ENCODE measurements at regions of chr17 and their contacts with region 1.

Region 1: GRCh38 chr17:27236717-27237315 is 57.1 kb upstream of the WSB1 start:
- DNase-seq: peak; percentile 61
- ATAC-seq: peak; percentile 73
- H3K4me3 ChIP-seq: no peak overlapping the region
- H3K27ac ChIP-seq: no peak overlapping the region
- H3K4me1 ChIP-seq: peaks cover 9 to 11% of the 10 kb centered on the region in 2 experiments
- H3K27me3 ChIP-seq: no peaks in the 10 kb centered on the region
- CTCF ChIP-seq: peak; percentile 79 to 94 (median 84)
- POLR2A ChIP-seq: no peak
- RAD21 ChIP-seq: peak; percentile 83

Region 2: DNA sequence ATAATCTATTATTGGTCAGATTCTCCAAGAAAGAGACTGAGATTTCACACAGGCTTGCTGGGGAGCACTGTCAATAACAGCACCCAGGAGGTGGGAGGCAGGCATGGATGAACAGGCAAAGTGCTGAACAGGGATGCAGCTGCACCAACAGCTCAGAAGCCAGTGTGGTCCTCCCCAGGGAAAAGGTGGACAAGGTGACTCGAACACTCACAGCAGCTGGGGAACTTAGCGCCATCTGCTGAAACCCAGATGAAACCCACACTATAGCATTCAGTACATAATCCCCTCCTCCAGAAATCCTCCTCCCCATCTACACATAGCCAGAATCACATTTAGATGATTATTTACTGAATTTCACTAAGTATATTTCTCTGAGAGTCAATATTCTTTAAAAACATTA is 198.1 kb before region 1 on chr17:
- CTCF ChIA-PET with region 1: no interaction called
- POLR2A ChIA-PET with region 1: no interaction called
- RAD21 ChIA-PET with region 1: no interaction called
- intact Hi-C with region 1: no loop called
- DNase-seq: peak; percentile 16
- ATAC-seq: peak; percentile 85
- H3K4me3 ChIP-seq: no peak overlapping the region
- H3K27ac ChIP-seq: no peak overlapping the region
- H3K4me1 ChIP-seq: no peaks in the 10 kb centered on the region
- H3K27me3 ChIP-seq: no peaks in the 10 kb centered on the region
- CTCF ChIP-seq: peak in 2 of 3 experiments; percentile 43 to 63; a peak in 4 of 6 replicates
- POLR2A ChIP-seq: no peak
- RAD21 ChIP-seq: peak; percentile 18; the same call in 1 of the 2 replicates

Region 3: DNA sequence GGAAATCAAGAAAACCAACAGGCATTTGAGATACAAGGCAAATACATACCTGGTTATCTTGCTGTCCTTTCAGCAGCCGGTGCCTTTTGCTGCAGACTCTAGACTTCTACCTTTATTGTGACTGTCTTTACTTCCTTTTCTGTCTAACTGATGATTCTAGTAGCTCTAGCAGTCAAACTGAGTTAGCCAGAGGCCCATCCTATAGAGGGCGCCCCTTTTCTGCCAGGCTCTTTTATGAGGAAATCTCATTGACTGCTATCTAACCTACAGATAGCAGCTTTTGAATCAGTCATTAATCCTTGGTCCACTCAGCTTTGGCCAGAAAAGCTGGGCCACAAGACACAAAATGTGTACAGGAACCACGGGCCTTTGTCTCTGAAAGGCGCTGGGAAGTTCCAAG is 30.4 kb before region 1 on chr17:
- CTCF ChIA-PET with region 1: interaction called, 26 read pairs
- POLR2A ChIA-PET with region 1: no interaction called
- RAD21 ChIA-PET with region 1: no interaction called
- intact Hi-C with region 1: no loop called
- DNase-seq: peak; percentile 23
- ATAC-seq: peak; percentile 94
- H3K4me3 ChIP-seq: no peak overlapping the region
- H3K27ac ChIP-seq: no peak overlapping the region
- H3K4me1 ChIP-seq: peaks cover 5 to 14% of the 10 kb centered on the region in 2 experiments; a peak in 3 of 4 replicates
- H3K27me3 ChIP-seq: no peaks in the 10 kb centered on the region
- CTCF ChIP-seq: peak in 2 of 3 experiments; percentile 74 to 76; a peak in 4 of 6 replicates
- POLR2A ChIP-seq: no peak
- RAD21 ChIP-seq: peak; percentile 18; the same call in 1 of the 2 replicates

Region 4: GRCh38 chr17:27226615-27227230 is 10.1 kb before region 1 on chr17:
- CTCF ChIA-PET with region 1: interaction called, 23 read pairs
- POLR2A ChIA-PET with region 1: no interaction called
- RAD21 ChIA-PET with region 1: interaction called in 1 of 2 experiments, 3 read pairs
- intact Hi-C with region 1: no loop called
- DNase-seq: no peak
- ATAC-seq: peak; percentile 79
- H3K4me3 ChIP-seq: no peak overlapping the region
- H3K27ac ChIP-seq: no peak overlapping the region
- H3K4me1 ChIP-seq: peaks cover 0 to 11% of the 10 kb centered on the region in 2 experiments; a peak in 2 of 4 replicates
- H3K27me3 ChIP-seq: no peaks in the 10 kb centered on the region
- CTCF ChIP-seq: no peak
- POLR2A ChIP-seq: no peak
- RAD21 ChIP-seq: no peak

Region 5: GRCh38 chr17:27276653-27277156 is 39.9 kb after region 1 on chr17:
- CTCF ChIA-PET with region 1: no interaction called
- POLR2A ChIA-PET with region 1: no interaction called
- RAD21 ChIA-PET with region 1: no interaction called
- intact Hi-C with region 1: no loop called
- DNase-seq: no peak
- ATAC-seq: peak; percentile 52; the same call in 1 of the 2 replicates
- H3K4me3 ChIP-seq: no peak overlapping the region
- H3K27ac ChIP-seq: no peak overlapping the region
- H3K4me1 ChIP-seq: no peaks in the 10 kb centered on the region
- H3K27me3 ChIP-seq: no peaks in the 10 kb centered on the region
- CTCF ChIP-seq: no peak
- POLR2A ChIP-seq: no peak
- RAD21 ChIP-seq: no peak

Region 6: GRCh38 chr17:27332485-27333409 is 95.9 kb after region 1 on chr17:
- CTCF ChIA-PET with region 1: interaction called, 55 read pairs
- POLR2A ChIA-PET with region 1: interaction called, 3 read pairs
- RAD21 ChIA-PET with region 1: interaction called, 11 to 12 read pairs
- intact Hi-C with region 1: loop called (anchors 2 kb)
- DNase-seq: peak; percentile 97
- ATAC-seq: peak; percentile 90
- H3K4me3 ChIP-seq: peak overlapping the region; percentile 43 to 57
- H3K27ac ChIP-seq: peak overlapping the region; percentile 92
- H3K4me1 ChIP-seq: peaks cover 31 to 35% of the 10 kb centered on the region in 2 experiments
- H3K27me3 ChIP-seq: no peaks in the 10 kb centered on the region
- CTCF ChIP-seq: peak; percentile 70 to 85 (median 73)
- POLR2A ChIP-seq: peak; percentile 2
- RAD21 ChIP-seq: peak; percentile 95

Region 7: DNA sequence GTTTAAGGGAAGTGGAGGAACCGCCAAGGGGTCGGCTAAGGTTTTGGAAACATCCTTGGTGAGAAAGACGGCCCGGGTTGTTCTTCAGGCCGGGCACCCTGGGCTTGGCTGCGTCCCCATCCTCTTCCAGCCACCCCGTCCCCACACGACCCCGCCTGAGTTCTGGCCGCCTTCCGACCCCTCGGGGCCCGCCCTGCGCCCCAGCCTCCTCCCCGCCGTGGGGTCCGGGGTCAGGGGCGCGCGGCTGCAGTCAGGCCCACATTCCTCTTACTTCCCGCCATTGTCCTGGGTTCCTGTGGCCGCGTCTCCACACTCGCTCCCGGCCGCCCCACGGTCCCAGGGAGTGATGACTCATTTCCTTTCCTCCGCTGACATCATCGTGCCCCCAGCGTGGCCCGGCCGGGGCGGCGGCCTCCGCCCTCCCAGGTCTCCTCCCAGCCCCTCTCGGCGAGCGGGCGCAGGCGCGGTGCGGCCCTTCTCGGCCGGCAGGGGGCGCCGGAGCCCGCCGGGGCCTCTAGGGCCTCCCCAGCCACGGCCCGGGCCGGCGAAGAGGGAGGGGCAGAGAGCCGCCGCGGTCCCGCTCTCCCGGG is 116.7 kb after region 1 on chr17:
- CTCF ChIA-PET with region 1: interaction called, 9 read pairs
- POLR2A ChIA-PET with region 1: no interaction called
- RAD21 ChIA-PET with region 1: interaction called in 1 of 2 experiments, 4 read pairs
- intact Hi-C with region 1: loop called (anchors 2 kb)
- DNase-seq: peak; percentile 78
- ATAC-seq: peak; percentile 74
- H3K4me3 ChIP-seq: peak overlapping the region; percentile 85 to 95
- H3K27ac ChIP-seq: peak overlapping the region; percentile 93
- H3K4me1 ChIP-seq: peaks cover 24 to 48% of the 10 kb centered on the region in 2 experiments
- H3K27me3 ChIP-seq: no peaks in the 10 kb centered on the region
- CTCF ChIP-seq: peak; percentile 58 to 85 (median 73)
- POLR2A ChIP-seq: peak; percentile 43
- RAD21 ChIP-seq: peak; percentile 70

Region 8: GRCh38 chr17:27430882-27431491 is 194.2 kb after region 1 on chr17:
- CTCF ChIA-PET with region 1: interaction called, 5 read pairs
- POLR2A ChIA-PET with region 1: no interaction called
- RAD21 ChIA-PET with region 1: no interaction called
- intact Hi-C with region 1: loop called (anchors 2 kb)
- DNase-seq: peak; percentile 28
- ATAC-seq: peak; percentile 99
- H3K4me3 ChIP-seq: no peak overlapping the region
- H3K27ac ChIP-seq: no peak overlapping the region
- H3K4me1 ChIP-seq: no peaks in the 10 kb centered on the region
- H3K27me3 ChIP-seq: no peaks in the 10 kb centered on the region
- CTCF ChIP-seq: peak; percentile 59 to 81 (median 66); a peak in 5 of 6 replicates
- POLR2A ChIP-seq: no peak
- RAD21 ChIP-seq: peak; percentile 66

Region 9: GRCh38 chr17:27760069-27760885 is 523.5 kb after region 1 on chr17:
- CTCF ChIA-PET with region 1: no interaction called
- POLR2A ChIA-PET with region 1: no interaction called
- RAD21 ChIA-PET with region 1: no interaction called
- intact Hi-C with region 1: loop called (anchors 10 kb)
- DNase-seq: peak; percentile 24
- ATAC-seq: peak; percentile 86
- H3K4me3 ChIP-seq: no peak overlapping the region
- H3K27ac ChIP-seq: no peak overlapping the region
- H3K4me1 ChIP-seq: no peaks in the 10 kb centered on the region
- H3K27me3 ChIP-seq: no peaks in the 10 kb centered on the region; the same call in none of the 2 replicates
- CTCF ChIP-seq: peak; percentile 92 to 94 (median 93)
- POLR2A ChIP-seq: no peak
- RAD21 ChIP-seq: peak; percentile 77

Measured in HCT116 (cell line).